ENCODE measurements at regions of chr2 and their contacts with region 1.

Region 1: GRCh38 chr2:180077295-180077906 is 70.3 kb upstream of the CWC22 start:
- DNase-seq: no peak

Region 2: DNA sequence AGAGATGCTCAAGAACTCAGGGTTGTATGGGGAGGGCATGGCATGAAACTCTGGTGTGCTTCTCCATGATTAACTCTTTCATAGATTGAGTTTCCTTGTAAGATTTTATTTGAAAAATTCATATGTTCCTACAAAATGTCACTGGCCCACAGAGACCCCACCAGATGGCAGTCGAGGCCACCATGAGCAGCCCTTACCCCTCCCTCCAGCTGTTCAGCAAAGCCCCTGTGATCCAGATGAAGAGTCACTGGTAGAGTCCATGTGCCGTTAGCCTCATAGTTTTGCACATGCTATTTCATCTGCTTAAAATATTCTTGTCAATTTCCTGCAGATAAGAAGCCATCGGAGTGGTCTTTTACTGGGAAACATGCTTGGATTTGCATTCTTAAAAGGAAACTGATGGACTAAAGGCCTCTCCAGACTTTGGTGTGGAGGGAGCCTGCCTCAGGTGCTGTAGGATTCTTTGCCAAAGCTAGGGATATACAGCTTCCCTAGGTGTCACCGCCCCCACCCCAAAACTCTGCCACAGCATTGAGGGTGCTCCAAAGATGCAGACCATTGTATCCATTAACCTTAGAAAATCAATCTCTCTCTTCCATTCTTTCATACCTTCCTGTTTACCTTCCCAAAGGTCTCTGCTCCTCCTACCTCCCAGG is 234.8 kb before region 1 on chr2:
- intact Hi-C with region 1: loop called (anchors 10 kb)
- DNase-seq: no peak